A549 (cell line): ENCODE measurements at regions of chr6 and their contacts with region 1.

Region 1: GRCh38 chr6:47631269-47631772 is 67.1 kb upstream of the ADGRF4 start:
- DNase-seq: peak in 1 of 2 experiments; percentile 50
- ATAC-seq: peak; percentile 70 to 80; a peak in 4 of 6 replicates
- H3K4me3 ChIP-seq: no peak overlapping the region
- H3K27ac ChIP-seq: no peak overlapping the region
- H3K4me1 ChIP-seq: no peaks in the 10 kb centered on the region
- CTCF ChIP-seq: peak; percentile 66
- EP300 ChIP-seq: no peak
- POLR2A ChIP-seq: no peak
- RAD21 ChIP-seq: peak; percentile 77 to 82

Region 2: GRCh38 chr6:47729019-47729418 is 97.7 kb after region 1 on chr6:
- CTCF ChIA-PET with region 1: interaction called, 67 read pairs
- POLR2A ChIA-PET with region 1: no interaction called
- DNase-seq: no peak
- ATAC-seq: peak; percentile 76 to 83
- H3K4me3 ChIP-seq: no peak overlapping the region
- H3K27ac ChIP-seq: peak overlapping the region; percentile 25 to 46; a peak in 3 of 6 replicates
- H3K4me1 ChIP-seq: peaks cover 10% of the 10 kb centered on the region
- CTCF ChIP-seq: no peak
- EP300 ChIP-seq: no peak
- POLR2A ChIP-seq: no peak
- RAD21 ChIP-seq: no peak

Region 3: DNA sequence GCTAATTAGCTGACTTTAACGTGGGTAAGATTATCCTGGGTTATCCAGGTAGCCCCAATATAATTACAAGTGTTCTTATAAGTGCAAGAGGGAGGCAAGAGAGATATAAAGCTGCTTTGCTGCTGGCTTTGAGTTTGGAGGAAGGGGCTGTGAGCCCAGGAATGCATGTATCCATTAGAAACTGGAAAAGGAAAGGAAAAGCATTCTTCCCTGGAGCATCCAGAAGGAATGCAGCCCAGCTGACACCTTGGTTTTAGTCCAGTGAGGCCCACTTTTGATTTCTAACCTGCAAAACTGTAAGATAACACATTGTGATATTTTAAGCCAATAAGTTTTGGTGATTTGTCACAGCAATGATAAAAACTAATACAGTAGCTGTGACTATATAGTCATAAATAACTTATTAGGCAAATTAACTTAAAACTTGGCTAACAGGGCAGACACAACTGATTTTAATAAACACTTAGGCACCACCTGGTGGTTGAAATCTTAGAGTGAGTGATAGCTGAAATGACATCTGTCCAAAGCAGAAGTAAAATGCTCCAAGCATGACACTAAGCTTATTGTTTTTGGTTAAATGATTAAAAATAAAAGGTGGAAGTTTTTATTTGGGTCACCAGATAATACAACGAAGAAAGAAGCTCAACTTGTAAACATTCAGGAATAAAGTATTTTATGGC is 102.7 kb after region 1 on chr6:
- CTCF ChIA-PET with region 1: interaction called, 67 read pairs
- POLR2A ChIA-PET with region 1: no interaction called
- DNase-seq: peak in 1 of 2 experiments; percentile 28
- ATAC-seq: peak in 1 of 2 experiments; percentile 50; a peak in 1 of 6 replicates
- H3K4me3 ChIP-seq: no peak overlapping the region
- H3K27ac ChIP-seq: no peak overlapping the region; a peak in 1 of 6 replicates
- H3K4me1 ChIP-seq: peaks cover 4% of the 10 kb centered on the region; the same call in 1 of the 3 replicates
- CTCF ChIP-seq: peak; percentile 56
- EP300 ChIP-seq: no peak
- POLR2A ChIP-seq: no peak
- RAD21 ChIP-seq: peak; percentile 60 to 73

Region 4: GRCh38 chr6:47780510-47781356 is 149.4 kb after region 1 on chr6:
- CTCF ChIA-PET with region 1: interaction called, 55 read pairs
- POLR2A ChIA-PET with region 1: no interaction called
- DNase-seq: peak; percentile 33 to 57
- ATAC-seq: peak; percentile 85 to 89
- H3K4me3 ChIP-seq: no peak overlapping the region
- H3K27ac ChIP-seq: peak overlapping the region; percentile 41 to 48; a peak in 3 of 6 replicates
- H3K4me1 ChIP-seq: no peaks in the 10 kb centered on the region
- CTCF ChIP-seq: peak; percentile 67
- EP300 ChIP-seq: no peak
- POLR2A ChIP-seq: no peak
- RAD21 ChIP-seq: peak; percentile 76 to 80

Region 5: GRCh38 chr6:47787620-47788497 is 156.5 kb after region 1 on chr6:
- CTCF ChIA-PET with region 1: interaction called, 55 read pairs
- POLR2A ChIA-PET with region 1: no interaction called
- DNase-seq: peak; percentile 47 to 59
- ATAC-seq: peak; percentile 80 to 92
- H3K4me3 ChIP-seq: no peak overlapping the region
- H3K27ac ChIP-seq: no peak overlapping the region
- H3K4me1 ChIP-seq: no peaks in the 10 kb centered on the region; the same call in 2 of the 3 replicates
- CTCF ChIP-seq: peak; percentile 87
- EP300 ChIP-seq: no peak
- POLR2A ChIP-seq: no peak
- RAD21 ChIP-seq: peak; percentile 92 to 93